ENCODE measurements at regions of chr4 and their contacts with region 1.

Region 1: DNA sequence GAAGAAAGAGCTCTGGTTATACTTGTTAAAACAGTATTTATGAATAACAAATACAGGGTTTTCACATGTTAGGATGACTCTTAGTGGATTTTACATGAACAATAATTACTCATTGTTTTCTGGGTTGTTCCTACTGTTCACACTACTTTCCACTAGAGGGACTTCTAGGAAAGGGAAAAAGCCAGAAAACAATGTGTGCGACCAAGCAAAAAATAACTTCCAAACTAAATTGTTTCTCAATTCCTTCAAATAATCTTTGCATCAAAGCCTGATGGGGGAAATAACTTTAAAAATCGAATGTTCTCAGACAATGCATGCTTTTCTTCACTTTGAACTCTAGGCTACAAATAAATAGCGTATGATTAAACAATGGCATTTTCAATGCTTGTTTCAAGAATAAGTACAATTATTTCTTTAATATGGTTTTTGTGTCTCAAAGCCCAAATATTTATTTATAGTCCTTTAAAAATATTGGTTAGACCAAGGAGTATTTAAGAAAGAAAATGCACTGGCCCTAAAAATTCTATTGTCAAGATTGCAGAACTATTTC is 72.1 kb upstream of the ETNPPL start:
- DNase-seq: no peak
- ATAC-seq: peak; percentile 52 to 78 (median 65)
- H3K4me3 ChIP-seq: no peak overlapping the region
- H3K27ac ChIP-seq: no peak overlapping the region
- H3K4me1 ChIP-seq: no peaks in the 10 kb centered on the region
- H3K27me3 ChIP-seq: peaks cover 0 to 16% (median 0%) of the 10 kb centered on the region in 4 donors
- CTCF ChIP-seq: peak; percentile 7 to 53 (median 40)

Region 2: GRCh38 chr4:109406338-109406931 is 571.5 kb after region 1 on chr4:
- intact Hi-C with region 1: loop called in 1 of 3 experiments (anchors 5 kb)
- DNase-seq: peak in 1 of 6 donors; percentile 24
- ATAC-seq: peak; percentile 68 to 89 (median 83)
- H3K4me3 ChIP-seq: no peak overlapping the region
- H3K27ac ChIP-seq: no peak overlapping the region
- H3K4me1 ChIP-seq: no peaks in the 10 kb centered on the region
- H3K27me3 ChIP-seq: no peaks in the 10 kb centered on the region
- CTCF ChIP-seq: peak; percentile 20 to 46 (median 40)

Measured in pancreas (tissue), 10 donors.